ENCODE measurements at regions of chr17 and their contacts with region 1.

Region 1: GRCh38 chr17:38349097-38349730 is 2.4 kb upstream of the SOCS7 start:
- DNase-seq: peak; percentile 88
- ATAC-seq: peak; percentile 44

Region 2: DNA sequence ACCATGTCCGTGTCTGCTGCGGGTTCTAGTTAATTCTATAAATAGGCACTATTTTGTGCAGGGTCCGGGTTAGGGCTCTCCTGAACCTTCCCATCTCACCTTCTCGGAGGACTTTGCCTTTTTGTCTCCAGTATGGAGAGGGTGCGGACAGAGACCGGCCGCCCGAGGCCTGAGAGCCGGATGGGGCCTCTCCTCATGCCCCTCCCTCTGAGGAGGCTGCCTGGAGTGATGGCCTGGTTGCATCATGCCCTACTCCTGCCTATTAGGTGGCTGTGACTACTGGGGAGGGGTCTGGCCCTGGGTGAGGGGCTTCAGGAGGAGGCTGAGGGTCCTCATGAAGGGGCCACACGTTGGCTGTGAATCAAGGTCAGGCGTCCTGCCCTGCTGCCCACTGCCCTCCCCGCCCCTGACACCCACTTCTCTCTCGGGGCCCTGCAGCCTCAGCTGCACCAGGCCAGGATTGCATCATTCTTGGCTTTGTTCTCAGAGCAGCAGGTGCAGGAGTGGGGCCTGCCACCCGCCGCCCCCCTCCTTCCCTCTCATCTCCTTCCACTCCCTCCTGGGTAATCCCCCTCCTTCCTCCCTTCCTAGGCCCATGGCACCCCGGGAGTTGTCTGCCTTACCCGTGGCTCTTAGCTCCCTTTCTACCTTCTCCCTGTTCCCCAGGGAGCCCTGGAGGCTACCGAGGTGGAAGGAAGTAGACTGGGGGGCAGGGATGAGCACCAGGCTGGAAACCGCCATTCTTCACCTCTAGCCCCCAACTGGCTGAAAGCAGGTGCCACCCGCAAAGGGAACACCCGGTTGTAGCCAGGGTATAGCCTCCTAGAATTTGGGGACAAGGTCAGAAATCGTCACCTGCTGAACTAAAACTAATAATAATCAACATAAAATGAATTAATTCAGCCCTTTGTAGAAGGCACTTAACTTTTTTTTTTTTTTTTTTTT is 66.3 kb after region 1 on chr17:
- intact Hi-C with region 1: loop called (anchors 1 kb)
- DNase-seq: no peak
- ATAC-seq: peak; percentile 56